GM12878 (cell line): ENCODE measurements at regions of chr10 and their contacts with region 1.

Region 1: DNA sequence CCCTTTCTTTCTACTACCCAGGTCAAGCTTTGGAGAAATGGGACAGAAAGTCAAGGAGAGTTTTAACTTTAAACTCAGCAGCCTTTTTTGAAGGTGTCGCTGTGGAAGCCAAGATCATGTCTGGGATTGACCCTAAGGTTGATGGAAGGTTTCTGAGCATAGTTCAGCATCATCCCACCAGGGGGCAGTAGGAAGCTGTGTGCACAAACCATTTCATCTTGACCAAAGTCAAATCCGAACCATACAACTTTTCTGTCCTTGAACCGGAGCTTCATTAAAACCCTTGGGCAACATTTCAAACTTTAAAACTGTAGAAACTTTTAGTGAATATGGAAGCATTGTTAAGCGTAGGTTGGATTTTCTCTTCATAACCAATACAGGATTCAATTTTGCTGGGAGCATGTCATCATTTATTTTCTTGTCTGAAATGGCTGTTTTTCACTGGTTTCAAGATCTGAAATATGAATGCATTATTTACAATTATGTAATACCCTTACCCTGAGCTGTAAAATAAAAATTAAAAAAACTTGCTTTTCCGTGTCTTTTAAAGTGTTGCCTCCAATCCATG is 214.4 kb upstream of the KIAA1217 start:
- DNase-seq: peak; percentile 5
- ATAC-seq: peak; percentile 84
- H3K4me3 ChIP-seq: no peak overlapping the region
- H3K27ac ChIP-seq: no peak overlapping the region
- H3K4me1 ChIP-seq: no peaks in the 10 kb centered on the region
- H3K27me3 ChIP-seq: no peaks in the 10 kb centered on the region; a peak in 1 of 4 replicates
- CTCF ChIP-seq: peak; percentile 74 to 79 (median 79)
- EP300 ChIP-seq: no peak
- POLR2A ChIP-seq: no peak
- RAD21 ChIP-seq: peak; percentile 81

Region 2: DNA sequence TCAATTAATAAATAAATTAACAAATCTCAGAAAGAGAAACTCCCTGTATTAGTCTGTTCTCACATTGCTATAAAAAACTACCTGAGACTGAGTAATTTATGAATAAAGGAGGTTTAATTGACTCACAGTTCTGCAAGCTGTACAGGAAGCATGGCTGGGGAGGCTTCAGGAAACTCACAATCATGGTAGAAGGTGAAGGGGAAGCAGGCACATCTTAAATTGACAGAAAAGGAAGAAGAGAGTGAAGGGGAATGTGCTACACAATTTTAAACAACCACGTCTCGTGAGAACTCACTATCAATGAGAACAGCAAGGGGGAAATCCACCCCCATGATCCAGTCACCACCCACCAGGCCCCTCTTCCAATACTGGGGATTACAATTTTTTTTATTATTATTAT is 143.9 kb before region 1 on chr10:
- CTCF ChIA-PET with region 1: no interaction called
- POLR2A ChIA-PET with region 1: no interaction called
- RAD21 ChIA-PET with region 1: no interaction called
- SMC1A ChIA-PET with region 1: no interaction called
- in situ Hi-C with region 1: no loop called
- intact Hi-C with region 1: no loop called
- DNase-seq: no peak
- ATAC-seq: no peak
- H3K4me3 ChIP-seq: no peak overlapping the region
- H3K27ac ChIP-seq: no peak overlapping the region
- H3K4me1 ChIP-seq: no peaks in the 10 kb centered on the region
- H3K27me3 ChIP-seq: no peaks in the 10 kb centered on the region
- CTCF ChIP-seq: no peak
- EP300 ChIP-seq: no peak
- POLR2A ChIP-seq: no peak
- RAD21 ChIP-seq: no peak

Region 3: DNA sequence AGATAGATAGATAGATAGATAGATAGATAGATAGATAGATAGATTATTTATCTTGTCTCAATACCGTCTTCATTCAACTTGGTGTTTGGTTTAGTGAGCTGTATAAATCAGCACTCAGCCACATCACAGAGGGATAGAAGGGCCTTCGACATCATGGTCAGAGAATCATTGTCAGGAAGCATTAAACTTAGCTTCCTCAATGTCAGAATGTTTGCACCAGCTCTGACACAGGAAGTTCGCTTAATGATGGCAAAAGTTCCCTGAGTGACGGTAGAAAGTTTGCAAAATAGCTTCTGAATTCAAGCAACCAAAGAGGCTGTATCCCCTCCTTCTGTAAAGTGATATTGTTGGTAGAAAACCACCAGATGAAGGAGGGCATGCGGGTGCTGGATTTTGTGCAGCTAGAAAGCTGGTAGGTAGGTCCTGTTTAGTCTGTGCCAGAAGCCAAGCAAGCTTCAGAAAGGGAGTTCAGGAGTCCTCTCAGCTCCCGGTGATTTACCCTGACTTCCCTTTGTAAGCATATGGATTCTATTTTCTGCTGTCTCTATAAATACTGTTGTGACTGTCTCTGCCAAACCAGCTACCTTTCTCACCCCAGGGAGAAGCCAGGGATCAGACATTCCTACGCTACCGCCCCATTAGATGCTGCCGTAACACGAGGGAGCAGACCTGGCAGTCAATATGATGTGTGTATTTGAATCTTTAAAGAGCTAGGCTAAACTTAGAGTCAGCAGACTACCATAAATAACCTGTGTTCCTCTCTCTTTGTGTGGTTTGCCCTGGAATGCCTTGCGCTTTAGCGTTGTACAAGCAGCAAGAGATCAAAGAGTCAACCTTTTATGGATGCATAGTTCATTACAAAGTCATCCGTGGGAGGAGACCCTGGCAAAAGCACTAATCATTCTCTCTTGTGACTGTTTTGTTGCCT is 13.9 kb after region 1 on chr10:
- CTCF ChIA-PET with region 1: interaction called, 19 read pairs
- POLR2A ChIA-PET with region 1: no interaction called
- RAD21 ChIA-PET with region 1: interaction called, 5 read pairs
- SMC1A ChIA-PET with region 1: interaction called, 7 read pairs
- in situ Hi-C with region 1: no loop called
- intact Hi-C with region 1: no loop called
- DNase-seq: no peak
- ATAC-seq: no peak
- H3K4me3 ChIP-seq: no peak overlapping the region
- H3K27ac ChIP-seq: no peak overlapping the region
- H3K4me1 ChIP-seq: no peaks in the 10 kb centered on the region
- H3K27me3 ChIP-seq: no peaks in the 10 kb centered on the region
- CTCF ChIP-seq: no peak
- EP300 ChIP-seq: no peak
- POLR2A ChIP-seq: no peak
- RAD21 ChIP-seq: no peak

Region 4: DNA sequence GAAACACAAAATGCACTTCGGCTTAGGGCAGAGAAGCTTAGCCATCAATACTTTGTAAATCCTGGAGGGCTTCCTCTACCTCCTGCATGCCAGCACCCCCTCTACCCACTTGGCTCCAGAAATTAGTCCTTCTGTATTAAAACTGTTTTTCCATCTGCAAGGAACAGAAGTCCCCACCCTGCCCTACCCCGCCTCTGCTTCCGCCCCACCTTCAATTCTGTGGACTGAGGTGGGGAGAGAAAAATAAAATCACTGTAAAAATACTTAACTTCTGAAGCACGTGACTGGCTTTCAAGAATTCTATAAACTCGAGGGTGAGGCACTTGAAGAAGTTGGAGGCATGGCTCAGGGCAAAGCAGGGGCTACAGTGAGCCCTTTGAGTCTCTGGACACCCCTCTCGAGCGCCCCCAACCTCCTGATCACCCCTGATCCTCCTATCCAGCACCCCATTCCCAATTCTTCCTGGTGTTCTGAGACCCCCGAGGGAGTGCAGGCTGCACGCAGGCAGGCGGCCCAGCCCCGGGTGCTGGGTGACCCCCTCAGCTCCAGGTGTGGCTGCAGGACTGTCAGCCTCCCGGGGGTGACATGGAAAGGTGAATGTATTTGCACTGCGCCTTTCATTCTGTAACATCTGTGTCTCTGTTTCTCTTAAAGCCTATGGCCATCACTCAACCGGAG is 207.1 kb after region 1 on chr10:
- CTCF ChIA-PET with region 1: interaction called, 43 read pairs
- POLR2A ChIA-PET with region 1: no interaction called
- RAD21 ChIA-PET with region 1: interaction called, 4 read pairs
- SMC1A ChIA-PET with region 1: interaction called, 8 read pairs
- in situ Hi-C with region 1: no loop called
- intact Hi-C with region 1: loop called (anchors 1 kb)
- DNase-seq: no peak
- ATAC-seq: no peak
- H3K4me3 ChIP-seq: no peak overlapping the region
- H3K27ac ChIP-seq: no peak overlapping the region
- H3K4me1 ChIP-seq: peaks cover 3% of the 10 kb centered on the region
- H3K27me3 ChIP-seq: no peaks in the 10 kb centered on the region
- CTCF ChIP-seq: no peak
- EP300 ChIP-seq: no peak
- POLR2A ChIP-seq: no peak
- RAD21 ChIP-seq: no peak

Region 5: GRCh38 chr10:24360282-24361127 is 365.9 kb after region 1 on chr10:
- CTCF ChIA-PET with region 1: interaction called, 45 read pairs
- POLR2A ChIA-PET with region 1: interaction called, 4 read pairs
- RAD21 ChIA-PET with region 1: interaction called, 11 read pairs
- SMC1A ChIA-PET with region 1: interaction called, 24 read pairs
- in situ Hi-C with region 1: no loop called
- intact Hi-C with region 1: loop called (anchors 2 kb)
- DNase-seq: no peak
- ATAC-seq: peak; percentile 90
- H3K4me3 ChIP-seq: no peak overlapping the region
- H3K27ac ChIP-seq: no peak overlapping the region
- H3K4me1 ChIP-seq: no peaks in the 10 kb centered on the region
- H3K27me3 ChIP-seq: no peaks in the 10 kb centered on the region
- CTCF ChIP-seq: peak; percentile 67 to 80 (median 67); a peak in 5 of 6 replicates
- EP300 ChIP-seq: no peak
- POLR2A ChIP-seq: no peak
- RAD21 ChIP-seq: peak; percentile 82

Region 6: GRCh38 chr10:24518981-24519597 is 524.5 kb after region 1 on chr10:
- CTCF ChIA-PET with region 1: interaction called, 49 read pairs
- POLR2A ChIA-PET with region 1: no interaction called
- RAD21 ChIA-PET with region 1: interaction called, 28 read pairs
- SMC1A ChIA-PET with region 1: interaction called, 35 read pairs
- in situ Hi-C with region 1: loop called (anchors 5 kb)
- intact Hi-C with region 1: loop called (anchors 1 kb)
- DNase-seq: no peak
- ATAC-seq: peak; percentile 68
- H3K4me3 ChIP-seq: no peak overlapping the region
- H3K27ac ChIP-seq: no peak overlapping the region
- H3K4me1 ChIP-seq: no peaks in the 10 kb centered on the region
- H3K27me3 ChIP-seq: no peaks in the 10 kb centered on the region
- CTCF ChIP-seq: peak; percentile 69 to 80 (median 77)
- EP300 ChIP-seq: no peak
- POLR2A ChIP-seq: no peak
- RAD21 ChIP-seq: peak; percentile 68